Head of caudate nucleus (tissue), 42 donors: ENCODE measurements at regions of chr20 and their contacts with region 1.

Region 1: GRCh38 chr20:35092524-35093266 is at the start of gene TRPC4AP:
- DNase-seq: peak; percentile 69 to 96 (median 90)

Region 2: GRCh38 chr20:34849778-34850177 is 242.9 kb before region 1 on chr20:
- intact Hi-C with region 1: no loop called
- DNase-seq: no peak

Region 3: GRCh38 chr20:34872622-34873224 is 220.0 kb before region 1 on chr20 and contains the start of gene GGT7:
- intact Hi-C with region 1: loop called (anchors 5 kb)
- DNase-seq: peak; percentile 62 to 96 (median 89)

Region 4: DNA sequence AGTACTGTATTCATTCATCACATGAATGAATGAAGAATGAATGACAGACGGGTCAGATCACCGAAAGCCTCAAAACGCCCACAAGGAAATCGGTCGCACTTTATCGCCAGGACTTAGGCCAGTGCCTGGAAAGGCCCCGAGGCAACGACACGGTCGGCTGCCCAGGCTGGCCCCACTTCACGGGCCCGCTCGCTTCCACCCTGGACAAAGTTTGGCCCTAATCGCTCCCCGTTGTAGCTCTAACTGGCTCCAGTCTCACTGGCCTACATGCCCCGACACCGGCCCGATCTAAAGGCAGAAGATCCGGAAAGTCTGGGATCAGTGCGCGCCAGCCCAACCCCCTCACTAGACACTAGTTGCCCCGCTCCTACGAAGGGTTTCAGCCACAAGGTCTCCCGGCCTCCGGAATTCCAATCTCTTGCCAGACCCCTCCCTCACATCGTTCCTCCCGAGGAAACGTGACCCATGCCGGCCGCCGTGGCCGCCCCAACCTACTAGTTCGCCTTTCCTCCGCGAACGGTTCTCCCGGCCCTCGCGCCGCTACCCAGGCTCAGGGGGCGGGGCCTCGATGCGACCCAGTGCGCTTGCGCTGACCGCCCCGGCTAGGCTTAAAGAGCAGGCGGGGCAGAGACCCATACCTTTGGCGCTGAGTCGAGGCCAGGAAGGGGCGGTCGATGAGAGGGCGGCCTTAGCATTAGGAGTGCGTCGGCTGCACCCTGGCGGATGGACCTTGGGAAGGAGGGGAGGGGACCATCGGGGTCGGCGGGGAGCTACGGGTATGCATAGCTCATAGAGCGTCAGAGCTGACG is 137.3 kb before region 1 on chr20 and contains the starts of genes GSS and MYH7B:
- intact Hi-C with region 1: loop called (anchors 5 kb)
- DNase-seq: peak; percentile 90 to 99 (median 97)

Region 5: GRCh38 chr20:35049776-35050352 is 42.8 kb before region 1 on chr20:
- intact Hi-C with region 1: loop called (anchors 10 kb)
- DNase-seq: no peak

Region 6: GRCh38 chr20:35146920-35147574 is 54.4 kb after region 1 on chr20 and contains the start of gene EDEM2:
- intact Hi-C with region 1: loop called (anchors 10 kb)
- DNase-seq: peak; percentile 89 to 98 (median 95)